ENCODE measurements at regions of chr21 and their contacts with region 1.

Region 1: GRCh38 chr21:14572204-14572780 is 26.2 kb upstream of the SAMSN1 start:
- DNase-seq: no peak
- H3K4me3 Mint-ChIP-seq: peak overlapping the region; percentile 67
- H3K27ac Mint-ChIP-seq: peak overlapping the region; percentile 89
- H3K4me1 Mint-ChIP-seq: peaks cover 60% of the 10 kb centered on the region
- H3K27me3 Mint-ChIP-seq: no peaks in the 10 kb centered on the region

Region 2: GRCh38 chr21:14533504-14534428 is 38.5 kb before region 1 on chr21:
- intact Hi-C with region 1: loop called (anchors 1 kb)
- DNase-seq: peak; percentile 22
- H3K4me3 Mint-ChIP-seq: peak overlapping the region; percentile 86
- H3K27ac Mint-ChIP-seq: peak overlapping the region; percentile 99
- H3K4me1 Mint-ChIP-seq: peaks cover 79% of the 10 kb centered on the region
- H3K27me3 Mint-ChIP-seq: no peaks in the 10 kb centered on the region

Region 3: DNA sequence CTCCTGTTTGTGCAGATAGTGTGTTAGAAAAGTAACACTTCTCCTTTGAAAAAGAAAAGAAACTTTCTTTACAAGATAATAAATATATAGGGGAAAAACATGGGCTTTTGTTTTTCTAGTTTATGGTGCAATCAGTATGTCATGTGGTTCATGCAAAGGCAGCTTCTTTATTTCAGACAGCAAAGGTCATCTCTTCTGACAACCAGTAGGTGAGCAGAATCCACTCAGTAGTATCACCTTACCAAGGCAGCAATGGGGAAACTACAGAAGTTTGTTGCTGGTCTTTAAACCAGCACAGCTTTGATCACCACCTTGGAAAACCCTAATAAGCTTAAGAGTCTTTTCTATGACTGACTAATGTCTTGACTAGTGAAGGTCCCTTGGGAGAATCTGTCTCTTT is 13.2 kb before region 1 on chr21:
- intact Hi-C with region 1: loop called (anchors 1 kb)
- DNase-seq: no peak
- H3K4me3 Mint-ChIP-seq: no peak overlapping the region
- H3K27ac Mint-ChIP-seq: peak overlapping the region; percentile 45
- H3K4me1 Mint-ChIP-seq: peaks cover 78% of the 10 kb centered on the region
- H3K27me3 Mint-ChIP-seq: no peaks in the 10 kb centered on the region

Region 4: GRCh38 chr21:14620152-14620551 is 47.9 kb after region 1 on chr21:
- intact Hi-C with region 1: loop called (anchors 1 kb)
- DNase-seq: peak; percentile 4
- H3K4me3 Mint-ChIP-seq: no peak overlapping the region
- H3K27ac Mint-ChIP-seq: peak overlapping the region; percentile 74
- H3K4me1 Mint-ChIP-seq: peaks cover 37% of the 10 kb centered on the region
- H3K27me3 Mint-ChIP-seq: peaks cover 3% of the 10 kb centered on the region

Region 5: DNA sequence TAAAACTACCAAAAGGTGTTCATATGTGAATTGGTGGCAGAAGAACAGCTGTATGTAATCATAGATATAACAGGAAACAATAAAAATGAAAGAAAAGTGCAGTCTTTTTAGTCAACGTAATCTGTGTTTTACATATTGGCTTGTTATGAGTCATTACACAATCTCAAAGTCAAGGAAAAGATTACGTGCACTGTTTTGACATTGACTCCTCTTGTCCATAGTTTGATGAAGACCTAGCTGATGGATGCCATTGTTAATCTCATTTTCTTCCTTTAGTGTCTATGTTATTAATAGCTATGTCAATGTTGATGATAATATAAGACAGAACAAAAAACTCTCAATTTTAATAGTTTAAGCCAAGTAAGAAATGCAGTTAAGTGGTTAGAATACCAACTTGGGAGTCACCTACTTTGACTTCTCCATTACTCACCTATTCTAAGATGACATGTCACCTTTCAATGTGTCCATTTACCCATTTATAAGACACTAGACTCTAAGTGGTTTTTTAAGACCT is 58.3 kb after region 1 on chr21:
- intact Hi-C with region 1: no loop called
- DNase-seq: no peak
- H3K4me3 Mint-ChIP-seq: no peak overlapping the region
- H3K27ac Mint-ChIP-seq: peak overlapping the region; percentile 72
- H3K4me1 Mint-ChIP-seq: peaks cover 14% of the 10 kb centered on the region
- H3K27me3 Mint-ChIP-seq: peaks cover 2% of the 10 kb centered on the region

Region 6: GRCh38 chr21:14645702-14646101 is 73.4 kb after region 1 on chr21:
- intact Hi-C with region 1: no loop called
- DNase-seq: no peak
- H3K4me3 Mint-ChIP-seq: no peak overlapping the region
- H3K27ac Mint-ChIP-seq: no peak overlapping the region
- H3K4me1 Mint-ChIP-seq: no peaks in the 10 kb centered on the region
- H3K27me3 Mint-ChIP-seq: no peaks in the 10 kb centered on the region

Region 7: GRCh38 chr21:14675774-14676530 is 103.7 kb after region 1 on chr21:
- intact Hi-C with region 1: loop called (anchors 5 kb)
- DNase-seq: no peak
- H3K4me3 Mint-ChIP-seq: peak overlapping the region; percentile 74
- H3K27ac Mint-ChIP-seq: peak overlapping the region; percentile 97
- H3K4me1 Mint-ChIP-seq: peaks cover 49% of the 10 kb centered on the region
- H3K27me3 Mint-ChIP-seq: no peaks in the 10 kb centered on the region